ENCODE measurements at regions of chr18 and their contacts with region 1.

Region 1: DNA sequence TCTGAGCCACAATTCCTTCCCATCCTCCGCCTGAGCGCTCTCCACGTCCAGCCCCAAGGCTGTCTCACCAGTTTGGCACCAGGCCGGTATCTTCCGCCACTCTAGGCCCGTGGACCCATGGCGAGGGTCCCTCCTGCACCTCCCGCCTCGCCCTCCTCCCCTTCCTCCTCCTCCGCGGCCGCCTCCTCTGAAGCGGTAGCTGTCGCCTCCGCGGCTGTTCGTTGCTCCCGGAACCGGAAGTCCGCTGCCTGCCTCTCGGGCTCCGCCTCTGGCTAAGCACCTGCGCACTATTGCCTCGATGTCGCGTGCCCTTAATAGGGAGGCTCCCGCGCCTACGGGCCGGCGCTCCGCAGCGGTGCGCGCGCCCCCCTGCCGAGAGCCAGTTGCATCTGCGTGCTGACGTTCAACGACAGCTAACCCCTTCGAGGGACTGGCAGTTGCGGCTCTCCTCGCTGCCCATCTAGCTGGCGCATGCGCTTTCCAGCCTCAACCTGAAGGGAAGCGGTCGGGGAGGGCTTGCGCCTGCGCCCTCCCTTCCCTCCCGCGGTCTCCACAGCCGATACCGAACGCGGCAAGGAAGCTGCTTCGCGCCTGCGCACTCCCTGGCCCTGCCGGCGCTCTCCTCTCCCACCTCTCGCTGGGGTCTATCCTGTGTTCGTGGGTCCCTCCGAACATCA is at the start of gene MBD1:
- DNase-seq: peak; percentile 95 to 99 (median 98)
- H3K4me3 ChIP-seq: peak within 1 kb of the TSS; percentile 69 to 100 (median 97)
- H3K27ac ChIP-seq: peak within 1 kb of the TSS; percentile 56 to 99 (median 95)
- H3K27me3 ChIP-seq: no peaks in the 10 kb centered on the region
- CTCF ChIP-seq: peak in 47 of 56 donors; percentile 0 to 67 (median 43)
- total RNA-seq, gene MBD1: 72.6 to 117 (median 94.0) TPM

Region 2: GRCh38 chr18:49494660-49495059 is 786.8 kb before region 1 on chr18:
- intact Hi-C with region 1: loop called (anchors 5 to 10 kb)
- DNase-seq: no peak
- H3K4me3 ChIP-seq: no peak overlapping the region
- H3K27ac ChIP-seq: no peak overlapping the region
- H3K27me3 ChIP-seq: peaks cover 0 to 9% (median 0%) of the 10 kb centered on the region in 45 donors
- CTCF ChIP-seq: no peak

Region 3: DNA sequence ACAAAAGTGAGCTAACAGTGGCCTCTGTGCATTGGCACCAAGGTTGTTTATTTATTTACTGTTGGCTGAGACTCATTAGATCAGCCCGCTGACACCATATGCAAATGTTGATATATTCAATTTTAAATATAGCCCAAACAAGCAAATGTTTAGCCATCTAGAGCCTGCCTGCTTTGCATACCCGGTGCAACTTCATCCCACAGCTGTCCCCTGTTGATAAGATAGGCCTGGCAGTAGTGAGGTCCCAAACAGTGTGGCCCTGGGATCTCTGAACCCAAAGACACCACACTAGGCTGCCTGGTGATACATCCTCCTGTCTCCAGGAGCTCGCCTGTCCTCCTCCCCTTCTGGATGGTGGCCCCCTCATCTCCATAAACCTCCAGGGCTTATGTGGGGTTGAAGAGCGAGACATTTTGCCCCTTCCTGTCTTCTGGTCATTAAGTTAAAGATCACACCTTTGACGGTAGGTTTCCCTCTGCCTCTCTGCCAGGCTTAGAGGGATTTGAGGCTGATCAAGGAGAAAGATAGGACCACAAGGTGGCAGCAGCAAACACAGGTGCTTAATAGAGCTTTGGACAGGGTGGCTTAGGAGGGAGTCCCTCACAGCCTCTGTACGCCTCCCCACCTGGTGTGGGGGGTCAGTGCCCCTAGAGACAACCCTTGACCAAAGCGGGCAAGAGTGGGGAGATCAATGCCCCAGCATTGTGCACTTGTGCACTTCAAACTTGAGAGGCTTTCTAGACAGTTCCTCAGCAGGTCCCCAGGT is 62.8 kb before region 1 on chr18:
- intact Hi-C with region 1: no loop called
- DNase-seq: peak in 1 of 10 donors; percentile 14
- H3K4me3 ChIP-seq: no peak overlapping the region
- H3K27ac ChIP-seq: no peak overlapping the region
- H3K27me3 ChIP-seq: peaks cover 0 to 9% (median 0%) of the 10 kb centered on the region in 45 donors
- CTCF ChIP-seq: peak in 27 of 56 donors; percentile 10 to 44 (median 27)

Region 4: DNA sequence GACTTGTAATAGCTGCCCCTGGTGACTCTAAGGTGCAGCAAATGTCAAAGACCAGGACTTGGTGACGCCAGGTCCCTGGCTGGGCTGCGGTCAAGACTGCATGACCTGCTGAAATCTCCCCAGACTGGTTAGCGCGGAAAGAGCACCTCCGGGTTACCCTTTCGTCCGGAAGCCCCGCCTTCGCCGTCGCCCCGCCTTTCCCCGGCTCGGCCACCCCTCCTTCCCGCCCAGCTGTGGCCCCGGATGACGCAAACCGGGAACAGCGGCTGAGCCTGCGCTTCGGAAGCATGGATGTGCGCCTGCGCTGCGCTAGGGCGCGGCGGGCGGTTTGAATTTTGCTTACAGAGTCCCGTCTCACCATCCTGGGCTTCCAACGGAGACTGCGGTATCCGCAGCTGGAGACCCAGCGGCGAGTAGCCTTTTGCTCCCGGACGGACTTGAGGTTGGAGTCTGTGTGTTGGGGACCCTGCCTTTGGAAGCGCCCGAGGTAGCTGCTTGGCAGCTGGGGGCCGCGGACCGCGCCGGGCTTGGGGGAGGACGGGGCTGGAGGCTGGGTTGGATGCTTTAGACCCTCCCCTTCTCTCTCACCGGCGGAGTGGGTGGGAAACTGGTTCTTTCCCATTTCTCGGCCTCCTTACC is 93.4 kb after region 1 on chr18 and contains the start of gene SKA1:
- intact Hi-C with region 1: loop called (anchors 5 kb)
- DNase-seq: peak; percentile 78 to 94 (median 86)
- H3K4me3 ChIP-seq: peak within 1 kb of the TSS; percentile 44 to 80 (median 63)
- H3K27ac ChIP-seq: peak within 1 kb of the TSS in 50 of 59 donors; percentile 1 to 88 (median 73)
- H3K27me3 ChIP-seq: no peaks in the 10 kb centered on the region
- CTCF ChIP-seq: peak in 16 of 56 donors; percentile 3 to 33 (median 13)
- total RNA-seq, gene SKA1: 0.15 to 1.7 (median 0.36) TPM in 76 of 120 experiments, not detected in the others